Adrenal gland (tissue), 19 donors: ENCODE measurements at regions of chr12 and their contacts with region 1.

Region 1: GRCh38 chr12:30985814-30986452 is 59.4 kb downstream of the TSPAN11 start:
- DNase-seq: peak; percentile 38 to 71 (median 52)
- H3K4me3 ChIP-seq: no peak overlapping the region
- H3K27ac ChIP-seq: no peak overlapping the region
- H3K4me1 ChIP-seq: no peaks in the 10 kb centered on the region
- H3K27me3 ChIP-seq: no peaks in the 10 kb centered on the region
- CTCF ChIP-seq: peak; percentile 20 to 62 (median 54)
- POLR2A ChIP-seq: no peak

Region 2: DNA sequence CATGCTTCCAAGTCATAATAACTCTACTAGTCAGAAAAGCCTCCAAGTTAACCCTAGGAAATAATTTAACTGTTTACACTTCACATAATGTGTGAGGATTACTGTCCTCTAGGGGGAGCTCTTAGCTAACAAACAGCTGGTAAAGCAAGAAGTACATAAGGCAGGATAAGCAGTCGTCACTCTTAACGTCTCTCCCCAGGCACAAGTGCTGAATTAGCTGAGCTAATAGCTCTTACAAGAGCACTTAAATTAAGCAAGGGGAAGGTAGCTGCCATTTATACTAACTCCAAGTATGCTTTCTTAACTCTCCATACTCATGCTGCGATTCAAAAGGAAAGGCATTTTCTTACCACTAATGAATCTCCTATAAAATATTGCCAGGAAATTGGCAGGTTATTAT is 138.7 kb before region 1 on chr12:
- intact Hi-C with region 1: loop called in 1 of 2 experiments (anchors 5 kb)
- DNase-seq: peak in 1 of 7 donors; percentile 21
- H3K4me3 ChIP-seq: no peak overlapping the region
- H3K27ac ChIP-seq: no peak overlapping the region
- H3K4me1 ChIP-seq: peaks cover 0 to 3% of the 10 kb centered on the region in 2 donors
- H3K27me3 ChIP-seq: no peaks in the 10 kb centered on the region
- CTCF ChIP-seq: peak; percentile 54 to 76 (median 69)
- POLR2A ChIP-seq: no peak

Region 3: DNA sequence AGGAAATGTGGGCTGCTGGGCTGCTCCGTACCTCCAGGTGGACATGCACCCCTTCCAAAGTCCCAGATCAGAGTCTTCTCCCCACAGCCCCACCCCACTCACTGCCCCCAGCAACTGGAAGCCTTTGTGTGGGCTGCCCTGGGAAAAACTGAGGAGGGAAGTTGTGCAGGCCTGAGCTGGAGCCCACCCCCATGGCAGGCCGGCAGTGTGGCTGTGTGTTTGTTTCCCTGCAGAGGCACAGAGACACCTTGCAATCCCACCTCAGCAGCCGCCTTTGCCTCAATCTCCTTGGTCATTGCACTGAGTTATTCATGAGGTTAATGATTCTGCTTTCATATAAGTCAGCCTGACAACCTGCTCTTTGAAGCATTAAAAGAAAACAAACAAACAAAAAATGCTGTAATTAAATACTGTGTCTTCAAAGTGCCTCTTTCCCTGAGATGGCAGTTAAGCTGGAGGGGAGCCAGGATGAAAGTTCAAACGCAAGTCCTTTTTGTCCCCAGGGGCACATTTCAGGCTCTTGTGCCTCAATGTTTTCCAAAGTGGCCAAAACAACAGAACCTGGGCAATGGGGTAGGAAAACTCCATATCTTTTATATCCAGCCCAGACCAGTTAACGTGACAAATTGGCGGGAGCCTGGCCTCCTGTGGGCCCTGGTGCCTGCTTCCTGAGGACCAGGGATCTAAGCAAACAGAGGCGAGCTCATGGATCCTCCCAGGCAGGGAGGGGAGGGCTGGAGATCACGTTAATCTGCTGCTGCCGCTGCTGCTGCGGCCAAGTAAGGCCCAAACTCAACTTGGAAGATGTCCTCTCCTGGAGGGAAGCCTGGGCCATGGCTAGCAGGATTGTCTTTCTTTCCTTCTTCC is 111.2 kb before region 1 on chr12:
- intact Hi-C with region 1: loop called in 1 of 2 experiments (anchors 10 kb)
- DNase-seq: no peak
- H3K4me3 ChIP-seq: no peak overlapping the region
- H3K27ac ChIP-seq: no peak overlapping the region
- H3K4me1 ChIP-seq: no peaks in the 10 kb centered on the region
- H3K27me3 ChIP-seq: no peaks in the 10 kb centered on the region
- CTCF ChIP-seq: no peak
- POLR2A ChIP-seq: no peak

Region 4: GRCh38 chr12:30953951-30954751 is 31.8 kb before region 1 on chr12:
- intact Hi-C with region 1: no loop called
- DNase-seq: no peak
- H3K4me3 ChIP-seq: no peak overlapping the region
- H3K27ac ChIP-seq: no peak overlapping the region
- H3K4me1 ChIP-seq: no peaks in the 10 kb centered on the region
- H3K27me3 ChIP-seq: no peaks in the 10 kb centered on the region
- CTCF ChIP-seq: no peak
- POLR2A ChIP-seq: no peak